H1 (cell line): ENCODE measurements at regions of chr17 and their contacts with region 1.

Region 1: DNA sequence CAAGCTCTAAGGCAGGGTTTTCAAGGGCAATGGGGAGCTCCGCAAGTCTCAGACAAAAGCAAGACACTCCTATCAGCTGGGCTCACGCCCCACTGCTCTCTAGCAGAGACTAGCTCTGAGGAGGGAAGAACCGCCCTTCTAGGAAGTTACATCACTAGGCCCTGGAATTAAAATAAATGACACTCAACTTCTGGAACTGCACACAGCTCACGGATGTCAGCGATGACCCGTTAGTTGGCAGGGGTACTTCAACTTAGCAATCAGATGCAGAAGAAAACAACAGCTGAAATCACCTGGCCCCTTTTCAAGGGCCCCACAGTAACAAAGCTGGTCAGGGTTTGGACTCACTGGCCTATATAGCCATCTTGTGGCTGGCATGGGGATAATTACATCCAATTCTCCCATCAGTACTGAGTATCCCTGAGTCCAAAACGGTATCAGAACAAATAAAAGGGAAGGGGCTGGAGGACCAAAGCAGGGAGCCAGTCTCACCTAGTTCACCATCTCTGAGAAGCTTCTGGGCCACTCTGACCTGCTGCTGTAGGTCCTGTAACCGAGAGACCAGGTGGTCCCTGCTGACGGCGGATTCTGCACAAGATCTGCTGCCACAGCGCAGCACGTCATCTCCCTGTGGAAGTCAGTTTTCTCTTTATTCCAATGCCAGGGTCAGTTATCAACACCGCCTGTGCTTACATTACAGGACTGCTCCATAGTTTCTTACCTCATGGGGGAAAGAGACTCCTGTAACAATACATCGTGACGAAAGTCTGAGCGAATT is 22.2 kb downstream of the SERPINF1 start:
- DNase-seq: no peak
- H3K4me3 ChIP-seq: no peak overlapping the region
- H3K27ac ChIP-seq: no peak overlapping the region
- H3K4me1 ChIP-seq: no peaks in the 10 kb centered on the region
- H3K27me3 ChIP-seq: no peaks in the 10 kb centered on the region
- CTCF ChIP-seq: peak; percentile 9 to 68 (median 59)
- EP300 ChIP-seq: no peak
- POLR2A ChIP-seq: no peak
- RAD21 ChIP-seq: peak; percentile 79 to 83

Region 2: DNA sequence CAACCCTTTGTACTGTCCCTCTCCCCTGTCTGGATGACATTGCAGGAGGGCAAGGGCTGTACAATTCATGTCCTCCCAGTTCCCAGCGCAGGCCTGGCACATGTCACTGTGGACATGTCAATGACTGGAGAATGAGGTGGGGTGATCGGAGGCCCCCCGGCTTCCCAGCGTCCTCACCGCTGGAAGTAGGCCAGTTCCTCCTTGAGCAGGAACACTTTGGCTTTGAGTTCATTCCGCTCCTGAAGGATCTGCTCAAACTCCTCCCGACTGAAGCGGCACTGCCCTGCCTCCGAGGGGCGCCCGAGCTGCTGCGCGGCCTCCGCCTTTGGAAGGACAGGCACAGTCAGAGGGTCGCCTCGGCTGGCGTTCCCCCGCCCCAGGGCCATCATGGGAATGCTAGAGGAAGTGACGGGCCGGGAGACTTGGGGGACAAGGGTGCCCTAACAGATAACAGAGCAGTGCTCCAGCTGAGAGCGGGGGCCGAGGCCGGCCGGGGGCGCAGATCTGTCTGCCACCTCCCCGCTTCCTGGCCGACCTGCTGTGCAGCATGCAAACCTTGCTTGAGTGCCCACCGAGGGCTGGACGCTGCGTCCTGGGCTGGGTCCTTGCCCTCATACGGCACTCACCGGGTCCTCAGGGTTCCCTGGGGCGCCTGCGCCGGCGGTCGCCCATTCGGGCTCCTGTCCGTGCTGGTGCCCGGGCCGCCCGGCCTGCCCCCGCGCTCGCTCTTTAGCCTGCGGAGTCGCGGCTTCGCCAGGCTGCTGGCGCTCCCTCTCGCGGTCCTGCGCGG is 135.7 kb before region 1 on chr17:
- CTCF ChIA-PET with region 1: no interaction called
- POLR2A ChIA-PET with region 1: no interaction called
- DNase-seq: peak in 1 of 2 experiments; percentile 85
- H3K4me3 ChIP-seq: peak overlapping the region; percentile 37 to 71 (median 47)
- H3K27ac ChIP-seq: no peak overlapping the region
- H3K4me1 ChIP-seq: peaks cover 0 to 39% (median 25%) of the 10 kb centered on the region in 4 experiments; a peak in 6 of 7 replicates
- H3K27me3 ChIP-seq: peaks cover 0 to 19% (median 8%) of the 10 kb centered on the region in 4 experiments; a peak in 5 of 7 replicates
- CTCF ChIP-seq: peak; percentile 63 to 72 (median 70)
- EP300 ChIP-seq: no peak
- POLR2A ChIP-seq: no peak
- RAD21 ChIP-seq: peak; percentile 23 to 41

Region 3: DNA sequence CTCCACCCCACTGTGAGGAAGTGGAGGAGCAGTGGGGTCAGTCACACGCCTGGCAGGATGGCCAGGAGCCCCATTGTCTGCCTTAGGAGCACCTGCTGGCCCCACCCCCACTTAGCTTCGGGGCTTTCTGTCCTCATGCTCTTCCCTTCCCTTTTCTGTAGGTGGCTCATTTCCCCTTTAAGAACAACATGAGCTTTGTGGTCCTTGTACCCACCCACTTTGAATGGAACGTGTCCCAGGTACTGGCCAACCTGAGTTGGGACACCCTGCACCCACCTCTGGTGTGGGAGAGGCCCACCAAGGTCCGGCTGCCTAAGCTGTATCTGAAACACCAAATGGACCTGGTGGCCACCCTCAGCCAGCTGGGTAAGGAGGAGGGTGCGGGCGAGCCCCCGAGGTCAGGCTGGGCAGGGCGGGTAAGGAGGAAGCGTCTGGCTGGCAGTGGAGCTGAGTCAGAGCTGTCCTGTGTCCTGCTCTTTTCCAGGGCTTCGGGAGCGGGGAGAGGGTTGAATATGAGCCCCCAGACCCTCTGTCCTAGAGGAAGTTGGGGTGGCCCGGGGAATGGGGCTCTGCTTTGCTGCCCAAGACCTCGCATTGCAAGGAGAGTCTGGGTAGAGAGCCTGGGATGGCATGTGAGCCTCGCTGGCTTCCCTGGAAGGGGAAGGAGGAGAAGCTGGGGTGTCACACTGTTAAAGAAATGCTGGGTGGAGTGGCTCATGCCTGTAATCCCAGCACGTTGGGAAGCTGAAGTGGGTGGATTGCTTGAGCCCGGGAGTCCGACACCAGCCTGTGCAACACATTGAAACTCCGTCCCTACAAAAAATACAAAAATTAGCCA is 31.4 kb before region 1 on chr17:
- CTCF ChIA-PET with region 1: interaction called, 20 read pairs
- POLR2A ChIA-PET with region 1: interaction called, 3 read pairs
- DNase-seq: no peak
- H3K4me3 ChIP-seq: peak overlapping the region in 1 of 4 experiments; percentile 33; a peak in 1 of 8 replicates
- H3K27ac ChIP-seq: no peak overlapping the region
- H3K4me1 ChIP-seq: peaks cover 0 to 16% (median 11%) of the 10 kb centered on the region in 4 experiments; a peak in 6 of 7 replicates
- H3K27me3 ChIP-seq: no peaks in the 10 kb centered on the region
- CTCF ChIP-seq: no peak
- EP300 ChIP-seq: no peak
- POLR2A ChIP-seq: no peak
- RAD21 ChIP-seq: no peak

Region 4: GRCh38 chr17:1764284-1764683 is 19.7 kb before region 1 on chr17:
- CTCF ChIA-PET with region 1: interaction called, 70 read pairs
- POLR2A ChIA-PET with region 1: interaction called, 17 read pairs
- DNase-seq: no peak
- H3K4me3 ChIP-seq: no peak overlapping the region
- H3K27ac ChIP-seq: no peak overlapping the region
- H3K4me1 ChIP-seq: peaks cover 0 to 25% (median 21%) of the 10 kb centered on the region in 4 experiments; a peak in 6 of 7 replicates
- H3K27me3 ChIP-seq: no peaks in the 10 kb centered on the region; a peak in 2 of 7 replicates
- CTCF ChIP-seq: no peak
- EP300 ChIP-seq: no peak
- POLR2A ChIP-seq: no peak
- RAD21 ChIP-seq: no peak

Region 5: DNA sequence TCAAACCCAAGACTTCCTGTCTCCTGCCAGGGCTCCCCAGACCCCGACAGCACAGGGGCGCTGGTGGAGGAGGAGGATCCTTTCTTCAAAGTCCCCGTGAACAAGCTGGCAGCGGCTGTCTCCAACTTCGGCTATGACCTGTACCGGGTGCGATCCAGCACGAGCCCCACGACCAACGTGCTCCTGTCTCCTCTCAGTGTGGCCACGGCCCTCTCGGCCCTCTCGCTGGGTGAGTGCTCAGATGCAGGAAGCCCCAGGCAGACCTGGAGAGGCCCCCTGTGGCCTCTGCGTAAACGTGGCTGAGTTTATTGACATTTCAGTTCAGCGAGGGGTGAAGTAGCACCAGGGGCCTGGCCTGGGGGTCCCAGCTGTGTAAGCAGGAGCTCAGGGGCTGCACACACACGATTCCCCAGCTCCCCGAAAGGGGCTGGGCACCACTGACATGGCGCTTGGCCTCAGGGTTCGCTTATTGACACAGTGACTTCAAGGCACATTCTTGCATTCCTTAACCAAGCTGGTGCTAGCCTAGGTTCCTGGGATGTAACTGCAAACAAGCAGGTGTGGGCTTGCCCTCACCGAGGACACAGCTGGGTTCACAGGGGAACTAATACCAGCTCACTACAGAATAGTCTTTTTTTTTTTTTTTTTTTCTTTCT is 14.1 kb before region 1 on chr17:
- CTCF ChIA-PET with region 1: interaction called, 70 read pairs
- POLR2A ChIA-PET with region 1: interaction called, 17 read pairs
- DNase-seq: no peak
- H3K4me3 ChIP-seq: no peak overlapping the region
- H3K27ac ChIP-seq: no peak overlapping the region
- H3K4me1 ChIP-seq: peaks cover 0 to 10% (median 6%) of the 10 kb centered on the region in 4 experiments; a peak in 5 of 7 replicates
- H3K27me3 ChIP-seq: no peaks in the 10 kb centered on the region
- CTCF ChIP-seq: no peak
- EP300 ChIP-seq: no peak
- POLR2A ChIP-seq: 0 out of 3 replicates have a peak, but pooled peaks of 1 of the 2 experiments have one; percentile 26
- RAD21 ChIP-seq: no peak

Region 6: DNA sequence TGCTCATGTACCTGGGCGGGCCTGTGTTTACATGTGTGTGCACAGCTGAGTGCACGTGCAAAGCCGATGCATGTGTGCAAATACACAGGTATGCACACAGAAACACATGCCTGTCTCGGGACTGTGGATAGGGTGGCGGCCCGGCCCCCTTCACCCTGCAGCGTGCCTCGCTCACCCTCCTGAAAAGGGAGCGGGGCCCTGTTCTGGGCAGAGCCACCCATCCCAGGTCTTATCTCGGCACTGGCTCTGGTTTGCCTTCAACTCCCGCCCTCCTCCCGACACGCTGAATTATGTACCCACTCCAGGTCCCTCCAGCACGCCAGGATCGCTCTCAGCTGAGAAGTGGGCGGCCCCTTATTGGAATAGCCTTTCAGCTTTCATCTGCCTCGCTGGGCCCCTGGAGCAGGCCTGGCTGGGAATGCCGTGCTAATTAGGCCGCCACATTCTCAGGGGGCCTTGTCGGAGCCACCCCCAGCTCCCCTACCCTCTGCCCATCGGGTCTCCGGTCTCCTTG is 163.3 kb after region 1 on chr17:
- CTCF ChIA-PET with region 1: no interaction called
- POLR2A ChIA-PET with region 1: no interaction called
- DNase-seq: no peak
- H3K4me3 ChIP-seq: no peak overlapping the region
- H3K27ac ChIP-seq: no peak overlapping the region
- H3K4me1 ChIP-seq: no peaks in the 10 kb centered on the region
- H3K27me3 ChIP-seq: no peaks in the 10 kb centered on the region
- CTCF ChIP-seq: no peak
- EP300 ChIP-seq: no peak
- POLR2A ChIP-seq: no peak
- RAD21 ChIP-seq: no peak